ENCODE measurements at regions of chr13 and their contacts with region 1.

Region 1: DNA sequence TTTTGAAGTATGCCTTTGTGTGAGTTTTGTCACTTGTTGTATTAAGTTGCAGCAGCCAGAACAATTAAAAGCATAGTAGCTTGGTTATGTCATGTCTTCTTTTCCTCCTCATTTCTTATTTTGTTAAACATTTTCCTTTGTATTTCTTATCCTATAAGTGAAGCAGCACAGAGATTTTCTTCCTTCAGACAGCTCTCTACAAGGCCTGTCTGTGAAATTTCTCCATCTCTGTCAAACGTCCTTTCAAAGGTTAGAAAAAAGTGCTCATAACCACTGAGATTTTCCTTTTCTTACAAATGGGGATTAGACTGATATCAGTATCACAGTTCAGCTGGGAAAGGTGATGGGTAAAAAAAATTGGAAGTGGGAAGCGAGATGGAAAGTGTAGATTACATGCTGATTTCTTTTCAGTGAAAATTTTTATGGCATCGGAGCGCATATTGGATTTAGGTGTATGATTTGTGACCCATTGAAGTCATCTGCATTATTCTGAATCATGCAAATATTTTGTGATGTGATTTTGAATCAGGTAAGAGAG is 71.7 kb downstream of the GPC5 start:
- DNase-seq: no peak
- ATAC-seq: no peak
- H3K4me3 ChIP-seq: no peak overlapping the region
- H3K27ac ChIP-seq: no peak overlapping the region
- H3K4me1 ChIP-seq: no peaks in the 10 kb centered on the region
- H3K27me3 ChIP-seq: no peaks in the 10 kb centered on the region
- CTCF ChIP-seq: no peak
- POLR2A ChIP-seq: no peak

Region 2: GRCh38 chr13:91747186-91747585 is 277.0 kb after region 1 on chr13:
- intact Hi-C with region 1: no loop called
- DNase-seq: no peak
- ATAC-seq: no peak
- H3K4me3 ChIP-seq: no peak overlapping the region
- H3K27ac ChIP-seq: no peak overlapping the region
- H3K4me1 ChIP-seq: no peaks in the 10 kb centered on the region
- H3K27me3 ChIP-seq: no peaks in the 10 kb centered on the region
- CTCF ChIP-seq: no peak
- POLR2A ChIP-seq: no peak

Region 3: GRCh38 chr13:91792054-91792453 is 321.9 kb after region 1 on chr13:
- intact Hi-C with region 1: no loop called
- DNase-seq: no peak
- ATAC-seq: no peak
- H3K4me3 ChIP-seq: no peak overlapping the region
- H3K27ac ChIP-seq: no peak overlapping the region
- H3K4me1 ChIP-seq: no peaks in the 10 kb centered on the region
- H3K27me3 ChIP-seq: no peaks in the 10 kb centered on the region
- CTCF ChIP-seq: no peak
- POLR2A ChIP-seq: no peak

Region 4: GRCh38 chr13:91946498-91947070 is 476.4 kb after region 1 on chr13:
- intact Hi-C with region 1: loop called in 1 of 10 experiments (anchors 5 kb)
- DNase-seq: no peak
- ATAC-seq: no peak
- H3K4me3 ChIP-seq: no peak overlapping the region
- H3K27ac ChIP-seq: no peak overlapping the region
- H3K4me1 ChIP-seq: no peaks in the 10 kb centered on the region
- H3K27me3 ChIP-seq: no peaks in the 10 kb centered on the region
- CTCF ChIP-seq: peak in 6 of 12 donors; percentile 13 to 41 (median 26)
- POLR2A ChIP-seq: no peak